CD14-positive monocyte (primary cell): ENCODE measurements at regions of chr12 and their contacts with region 1.

Region 1: GRCh38 chr12:107131832-107132616 is 38.7 kb upstream of the CRY1 start:
- DNase-seq: peak; percentile 5 to 34 (median 27)
- H3K4me3 ChIP-seq: no peak overlapping the region
- H3K4me3 Mint-ChIP-seq: no peak overlapping the region
- H3K27ac ChIP-seq: no peak overlapping the region
- H3K27ac Mint-ChIP-seq: no peak overlapping the region
- H3K4me1 ChIP-seq: no peaks in the 10 kb centered on the region
- H3K4me1 Mint-ChIP-seq: peaks cover 4% of the 10 kb centered on the region
- H3K27me3 ChIP-seq: no peaks in the 10 kb centered on the region
- H3K27me3 Mint-ChIP-seq: peaks cover 0 to 5% (median 1%) of the 10 kb centered on the region in 3 donors
- CTCF ChIP-seq: peak; percentile 94

Region 2: GRCh38 chr12:107080299-107080698 is 51.7 kb before region 1 on chr12:
- intact Hi-C with region 1: no loop called
- DNase-seq: no peak
- H3K4me3 ChIP-seq: no peak overlapping the region
- H3K4me3 Mint-ChIP-seq: no peak overlapping the region
- H3K27ac ChIP-seq: no peak overlapping the region
- H3K27ac Mint-ChIP-seq: no peak overlapping the region
- H3K4me1 ChIP-seq: peaks cover 0 to 3% of the 10 kb centered on the region in 2 donors
- H3K4me1 Mint-ChIP-seq: peaks cover 6% of the 10 kb centered on the region
- H3K27me3 ChIP-seq: no peaks in the 10 kb centered on the region
- H3K27me3 Mint-ChIP-seq: peaks cover 0 to under 1% (median 0%) of the 10 kb centered on the region in 3 donors
- CTCF ChIP-seq: no peak

Region 3: DNA sequence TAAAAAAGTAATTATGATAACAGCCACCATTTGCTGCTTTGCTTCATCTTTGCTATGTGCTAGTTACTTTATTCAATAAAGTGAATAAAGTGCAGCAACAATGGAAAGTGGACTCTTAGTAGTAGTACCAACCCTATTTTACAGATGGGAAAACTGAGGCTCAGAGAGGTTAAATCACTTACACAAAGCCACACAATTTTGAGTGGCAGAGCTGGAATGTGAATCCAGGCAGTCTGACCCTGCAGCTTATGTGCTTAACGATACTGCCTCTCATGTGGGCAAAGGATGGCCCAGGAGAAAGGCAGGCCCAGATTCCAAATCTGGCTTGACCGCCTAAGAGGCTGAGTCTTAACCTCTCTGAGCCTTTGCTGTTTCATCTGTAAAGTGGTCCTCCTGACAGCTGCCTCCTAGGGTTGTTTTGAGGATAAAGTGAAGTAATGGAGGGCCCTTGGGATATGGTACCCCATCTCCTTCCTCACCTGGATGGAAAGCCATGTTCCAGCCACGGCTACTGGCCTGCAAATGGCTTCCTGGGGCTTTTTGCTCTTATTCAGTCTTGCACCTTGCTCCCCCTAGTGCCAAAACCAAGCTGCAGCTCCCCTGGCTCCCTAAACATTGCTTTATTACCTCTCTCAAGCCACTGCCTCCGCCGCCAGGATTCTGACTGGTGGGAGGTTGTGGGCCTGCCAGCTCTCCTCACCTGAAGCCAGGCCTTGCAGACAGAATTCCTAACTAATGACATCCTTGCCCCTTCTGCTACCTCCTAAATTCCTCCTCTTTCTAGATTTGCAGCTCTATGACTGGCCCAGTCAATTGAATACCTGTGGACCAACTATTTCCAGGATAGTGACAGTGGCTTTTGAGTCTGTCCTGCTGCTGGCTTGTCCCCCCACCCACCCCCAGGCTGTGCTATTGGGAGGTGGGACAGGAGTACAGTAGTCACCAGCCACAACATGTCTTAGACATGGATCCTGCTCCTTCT is 270.3 kb after region 1 on chr12:
- intact Hi-C with region 1: loop called (anchors 2 to 5 kb)
- DNase-seq: peak; percentile 36 to 59 (median 53)
- H3K4me3 ChIP-seq: no peak overlapping the region
- H3K4me3 Mint-ChIP-seq: no peak overlapping the region
- H3K27ac ChIP-seq: no peak overlapping the region
- H3K27ac Mint-ChIP-seq: peak overlapping the region in 1 of 7 donors; percentile 41
- H3K4me1 ChIP-seq: peaks cover 11 to 13% of the 10 kb centered on the region in 2 donors
- H3K4me1 Mint-ChIP-seq: peaks cover 17% of the 10 kb centered on the region
- H3K27me3 ChIP-seq: no peaks in the 10 kb centered on the region
- H3K27me3 Mint-ChIP-seq: no peaks in the 10 kb centered on the region
- CTCF ChIP-seq: peak; percentile 79

Region 4: GRCh38 chr12:107522692-107523477 is 390.9 kb after region 1 on chr12:
- intact Hi-C with region 1: no loop called
- DNase-seq: no peak
- H3K4me3 ChIP-seq: no peak overlapping the region
- H3K4me3 Mint-ChIP-seq: no peak overlapping the region
- H3K27ac ChIP-seq: no peak overlapping the region
- H3K27ac Mint-ChIP-seq: no peak overlapping the region
- H3K4me1 ChIP-seq: peaks cover 0 to 8% of the 10 kb centered on the region in 2 donors
- H3K4me1 Mint-ChIP-seq: peaks cover 13% of the 10 kb centered on the region
- H3K27me3 ChIP-seq: no peaks in the 10 kb centered on the region
- H3K27me3 Mint-ChIP-seq: no peaks in the 10 kb centered on the region
- CTCF ChIP-seq: no peak

Region 5: DNA sequence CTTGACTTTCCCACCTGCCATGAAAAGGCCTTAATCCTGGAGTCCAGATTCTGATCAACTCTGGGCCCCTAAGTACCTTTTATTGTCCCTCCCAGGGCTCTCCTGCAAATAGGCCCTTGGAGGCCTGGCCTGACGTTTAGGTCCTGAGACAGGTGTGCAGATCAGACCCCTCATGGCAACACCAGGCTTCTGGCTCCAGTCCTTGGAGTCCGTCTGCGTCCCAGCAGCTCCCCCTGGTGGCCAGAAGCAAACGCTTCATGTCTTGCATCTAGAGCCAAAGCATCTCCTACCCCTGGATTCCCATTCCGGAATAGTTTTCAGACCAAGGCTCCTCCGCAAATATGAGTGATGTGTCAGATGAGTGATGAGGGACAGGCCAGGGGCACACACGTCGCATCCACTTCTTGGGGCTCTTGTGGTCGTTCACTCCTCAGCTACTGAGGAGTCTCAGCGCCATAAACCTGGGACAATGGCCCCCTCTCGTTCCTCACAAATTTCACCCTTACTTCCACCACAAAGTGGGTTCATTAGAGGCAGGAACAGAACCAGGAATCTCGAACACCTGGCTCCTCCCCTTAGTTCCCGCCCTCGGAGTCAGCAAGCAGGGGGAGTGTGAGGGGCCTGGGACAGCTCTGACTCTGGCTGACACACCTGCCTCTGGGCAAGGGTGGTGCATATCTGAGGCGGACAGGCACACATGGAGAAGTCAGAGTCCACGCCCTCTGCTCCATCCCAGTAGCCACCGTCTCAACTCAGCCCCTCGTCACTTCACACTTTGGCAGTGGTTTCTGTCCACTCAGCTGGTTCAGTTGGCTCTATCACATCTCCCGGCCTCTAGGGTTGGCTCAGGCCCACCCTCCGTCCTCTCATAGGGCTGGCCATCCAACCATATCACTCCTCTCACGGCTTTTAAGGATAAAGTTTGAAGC is 475.7 kb after region 1 on chr12:
- intact Hi-C with region 1: loop called (anchors 1 to 2 kb)
- DNase-seq: peak; percentile 48 to 65 (median 50)
- H3K4me3 ChIP-seq: no peak overlapping the region
- H3K4me3 Mint-ChIP-seq: no peak overlapping the region
- H3K27ac ChIP-seq: no peak overlapping the region
- H3K27ac Mint-ChIP-seq: peak overlapping the region in 1 of 7 donors; percentile 87
- H3K4me1 ChIP-seq: no peaks in the 10 kb centered on the region
- H3K4me1 Mint-ChIP-seq: no peaks in the 10 kb centered on the region
- H3K27me3 ChIP-seq: no peaks in the 10 kb centered on the region
- H3K27me3 Mint-ChIP-seq: peaks cover 0 to 5% (median 0%) of the 10 kb centered on the region in 3 donors
- CTCF ChIP-seq: peak; percentile 92